ENCODE measurements at regions of chr2 and their contacts with region 1.

Region 1: DNA sequence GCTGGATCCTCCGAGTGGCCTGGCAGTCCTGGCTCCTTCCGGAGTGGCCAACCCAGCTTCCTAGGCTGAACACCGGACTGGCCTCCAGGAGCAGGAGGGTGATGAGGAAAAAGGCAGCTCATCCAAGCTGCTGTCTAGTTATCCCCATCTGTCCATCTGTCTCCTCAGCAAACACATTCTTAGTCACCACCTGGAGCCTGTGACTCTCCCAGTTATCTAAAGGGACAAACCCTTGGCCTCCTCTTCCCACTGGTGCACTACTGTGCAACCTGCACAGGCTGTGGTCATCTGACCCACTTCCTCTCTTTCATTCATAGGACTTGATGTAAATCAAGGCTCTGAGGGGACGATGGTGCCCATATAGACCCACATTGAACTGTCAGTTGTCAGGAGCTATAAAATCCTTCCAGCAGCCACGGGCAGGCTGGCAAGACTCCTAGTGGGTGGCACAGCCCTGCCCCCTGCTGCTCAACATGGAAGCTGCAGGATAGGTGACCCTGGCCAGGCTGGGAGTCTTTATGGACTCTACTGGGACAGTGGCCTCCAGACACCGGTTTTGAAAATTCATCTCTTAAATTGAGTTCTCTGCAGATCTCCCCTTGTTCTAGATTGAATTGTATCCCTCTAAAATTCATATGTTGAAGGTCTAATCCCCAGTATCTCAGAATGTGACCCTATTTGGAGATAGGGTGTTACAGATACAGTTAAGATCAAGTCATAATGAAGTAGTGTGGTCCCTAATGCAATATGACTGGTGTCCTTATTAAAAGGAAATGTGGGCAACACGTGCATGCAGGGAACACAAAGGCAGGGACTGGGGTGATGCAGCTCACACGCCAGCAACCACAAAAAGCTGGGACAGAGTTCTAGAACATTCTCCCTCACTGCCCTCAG is 29.3 kb upstream of the DUSP2 start:
- DNase-seq: peak; percentile 30 to 72 (median 49)
- H3K4me3 ChIP-seq: no peak overlapping the region
- H3K27ac ChIP-seq: no peak overlapping the region
- H3K4me1 ChIP-seq: no peaks in the 10 kb centered on the region
- H3K27me3 ChIP-seq: no peaks in the 10 kb centered on the region
- CTCF ChIP-seq: peak; percentile 29 to 34 (median 33)
- EP300 ChIP-seq: no peak
- POLR2A ChIP-seq: no peak

Region 2: DNA sequence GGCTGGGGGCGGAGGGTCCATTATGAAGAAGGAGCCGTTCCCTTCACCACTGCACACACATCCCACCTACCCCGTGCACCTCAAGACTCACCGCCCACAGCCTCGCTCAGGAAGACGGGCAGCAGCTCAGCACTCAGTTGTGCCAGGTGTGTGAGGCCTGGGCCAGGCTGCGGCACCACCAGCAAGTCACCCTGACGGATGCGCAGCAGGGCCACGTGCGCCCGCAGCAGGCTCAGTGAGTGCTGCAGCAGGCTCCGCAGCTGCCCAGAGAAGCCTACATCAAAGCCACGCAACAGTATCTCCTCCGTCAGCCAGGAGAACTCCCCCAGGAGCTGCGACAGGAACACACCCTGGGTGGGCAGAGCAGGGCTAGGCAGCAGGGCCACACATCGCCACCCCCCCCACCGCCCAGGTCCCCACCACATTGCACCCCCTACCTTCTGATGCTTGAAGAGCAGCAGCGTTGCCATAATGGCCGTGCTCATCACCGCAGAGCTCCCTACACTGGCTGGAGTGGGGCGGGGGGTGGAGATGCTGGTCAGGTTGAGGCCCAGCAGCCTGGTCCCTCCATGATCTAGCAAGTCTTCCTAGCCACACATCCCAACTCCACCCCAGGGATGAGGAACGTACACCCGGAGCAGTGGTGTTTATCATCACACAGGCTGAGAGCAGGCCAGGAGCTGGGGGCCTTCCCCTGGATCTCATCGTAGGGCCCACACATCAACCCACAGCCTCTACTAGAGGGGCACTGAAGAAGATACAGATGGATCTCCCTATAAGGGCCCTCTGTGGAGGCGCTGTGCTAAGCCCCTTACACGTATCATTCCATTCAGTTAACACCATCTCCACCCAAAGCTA is 149.9 kb before region 1 on chr2:
- intact Hi-C with region 1: loop called in 1 of 4 experiments (anchors 10 kb)
- DNase-seq: no peak
- H3K4me3 ChIP-seq: no peak overlapping the region
- H3K27ac ChIP-seq: no peak overlapping the region
- H3K4me1 ChIP-seq: no peaks in the 10 kb centered on the region
- H3K27me3 ChIP-seq: no peaks in the 10 kb centered on the region
- CTCF ChIP-seq: no peak
- EP300 ChIP-seq: no peak
- POLR2A ChIP-seq: no peak

Region 3: GRCh38 chr2:96131152-96131812 is 43.2 kb before region 1 on chr2:
- intact Hi-C with region 1: loop called in 1 of 4 experiments (anchors 5 kb)
- DNase-seq: no peak
- H3K4me3 ChIP-seq: no peak overlapping the region
- H3K27ac ChIP-seq: no peak overlapping the region
- H3K4me1 ChIP-seq: no peaks in the 10 kb centered on the region
- H3K27me3 ChIP-seq: no peaks in the 10 kb centered on the region
- CTCF ChIP-seq: no peak
- EP300 ChIP-seq: no peak
- POLR2A ChIP-seq: no peak